Breast epithelium (tissue), 4 donors: ENCODE measurements at regions of chr18 and their contacts with region 1.

Region 1: DNA sequence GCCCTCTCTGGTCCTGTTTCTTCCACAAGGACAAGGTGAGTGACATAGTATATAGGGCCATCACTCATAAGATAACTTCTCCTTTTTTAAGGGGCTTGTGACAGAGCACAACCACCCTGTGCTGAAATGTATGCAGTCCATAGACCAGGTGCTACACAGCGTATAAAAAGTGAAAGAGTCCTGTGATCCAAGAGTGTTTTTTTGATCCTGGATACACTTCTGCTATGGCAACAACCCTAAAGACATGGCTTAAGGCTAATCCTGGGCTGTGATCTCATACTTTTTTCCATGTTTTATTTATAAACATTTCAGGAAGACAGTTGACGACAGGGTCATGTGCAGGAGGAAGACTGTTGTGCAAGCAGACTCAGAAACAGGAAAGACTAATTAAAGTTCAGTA is 400.5 kb upstream of the TCF4 start:
- DNase-seq: no peak
- H3K4me3 ChIP-seq: no peak overlapping the region
- H3K27ac ChIP-seq: peak overlapping the region in 1 of 2 donors; percentile 44
- H3K4me1 ChIP-seq: no peaks in the 10 kb centered on the region
- H3K27me3 ChIP-seq: no peaks in the 10 kb centered on the region
- CTCF ChIP-seq: no peak
- POLR2A ChIP-seq: no peak

Region 2: DNA sequence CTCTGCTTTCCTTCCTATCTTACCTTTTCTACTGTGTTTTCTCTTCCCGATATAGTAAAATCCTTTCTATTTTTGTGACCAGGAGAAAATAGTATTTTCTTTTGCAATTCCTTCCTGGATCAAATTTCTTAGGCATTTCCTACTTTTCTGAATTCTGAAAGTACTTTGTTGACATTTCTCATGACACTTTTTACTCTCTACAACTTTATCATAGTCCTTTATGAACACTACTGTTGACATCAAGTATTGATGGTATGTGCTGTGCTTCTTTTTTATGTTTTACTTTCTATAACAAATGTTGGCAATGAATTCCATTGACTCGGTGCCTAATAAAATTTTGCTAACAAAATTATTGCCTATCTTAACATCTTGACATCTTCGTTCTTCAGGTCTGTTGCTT is 182.9 kb before region 1 on chr18:
- intact Hi-C with region 1: loop called (anchors 5 kb)
- DNase-seq: no peak
- H3K4me3 ChIP-seq: no peak overlapping the region
- H3K27ac ChIP-seq: no peak overlapping the region
- H3K4me1 ChIP-seq: no peaks in the 10 kb centered on the region
- H3K27me3 ChIP-seq: no peaks in the 10 kb centered on the region
- CTCF ChIP-seq: no peak
- POLR2A ChIP-seq: no peak